GM13977 (cell line): ENCODE measurements at regions of chr12 and their contacts with region 1.

Region 1: DNA sequence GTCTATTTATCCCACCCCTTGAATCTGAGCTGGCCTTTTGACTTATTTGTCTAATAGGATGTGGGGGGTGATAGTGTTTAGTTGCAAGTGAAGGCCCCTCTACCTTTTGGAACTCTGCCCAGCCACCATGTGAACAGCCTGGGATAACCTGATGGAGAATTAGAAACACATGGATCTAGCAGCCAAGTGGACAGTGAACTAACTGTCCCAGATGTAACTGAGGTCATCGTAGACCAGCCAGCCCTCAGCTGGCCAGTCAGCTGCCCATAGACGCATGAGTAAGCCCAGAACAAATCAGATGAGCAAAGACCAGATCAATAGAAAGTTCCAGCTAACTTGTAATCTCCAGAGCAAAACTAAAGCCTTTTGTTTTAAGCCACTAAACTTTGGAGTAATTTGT is 19.0 kb downstream of the KLRB1 start:
- DNase-seq: no peak
- CTCF ChIP-seq: no peak

Region 2: GRCh38 chr12:9464408-9464807 is 124.3 kb before region 1 on chr12:
- in situ Hi-C with region 1: loop called (anchors 25 kb)
- DNase-seq: no peak
- CTCF ChIP-seq: no peak

Region 3: GRCh38 chr12:9760699-9761418 is 172.1 kb after region 1 on chr12 and contains the start of gene CD69:
- in situ Hi-C with region 1: no loop called
- DNase-seq: peak; percentile 29
- CTCF ChIP-seq: no peak